ENCODE measurements at regions of chr10 and their contacts with region 1.

Region 1: DNA sequence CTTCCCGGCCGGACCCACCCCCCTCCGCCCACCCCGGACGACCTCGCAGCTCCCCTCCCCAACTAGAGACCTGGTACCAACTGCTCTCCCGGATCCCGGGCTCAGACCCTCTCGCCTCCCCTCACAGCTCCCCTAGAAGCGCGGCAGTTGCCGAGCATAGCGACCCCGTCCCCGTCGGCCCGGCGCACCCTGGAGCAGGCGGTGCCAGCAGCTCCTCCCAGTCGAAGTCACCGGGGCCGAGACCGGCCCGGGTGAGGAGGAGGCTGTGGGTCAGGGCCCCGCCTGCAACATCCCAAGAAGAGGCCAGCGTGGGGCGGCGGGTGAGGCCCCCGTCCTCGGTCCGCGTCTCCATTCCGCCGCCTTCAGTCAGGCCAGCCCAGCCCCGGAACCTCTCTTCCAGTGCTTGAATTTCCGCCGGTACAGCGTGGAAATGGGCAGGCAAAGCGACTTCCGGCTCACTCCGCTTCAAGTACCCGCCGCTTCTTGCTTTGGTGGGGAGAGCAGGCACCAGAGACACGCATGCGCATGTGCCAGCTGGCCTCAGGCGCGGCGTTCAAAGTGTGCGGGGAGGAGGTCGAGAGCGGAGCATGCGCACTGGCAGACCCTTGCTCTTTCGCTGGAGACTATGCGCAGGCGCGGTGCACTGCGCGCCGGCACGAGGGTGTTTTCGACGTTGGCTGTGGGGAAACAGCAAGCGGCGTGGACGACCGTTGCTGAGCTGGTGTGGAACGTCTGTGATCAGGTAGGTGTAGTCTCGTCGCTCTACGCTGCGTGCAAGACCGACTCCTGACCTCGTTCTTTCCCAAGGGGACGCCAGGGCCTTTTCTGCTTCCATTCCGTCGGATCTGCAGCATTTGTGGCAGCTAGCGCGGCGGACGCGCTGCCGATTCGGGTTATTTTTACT is at the start of gene C10orf88:
- DNase-seq: peak; percentile 95 to 99 (median 96)

Region 2: GRCh38 chr10:122879339-122880273 is 74.5 kb before region 1 on chr10 and contains the start of gene FAM24B:
- intact Hi-C with region 1: loop called (anchors 5 kb)
- DNase-seq: peak; percentile 84 to 99 (median 92)

Region 3: DNA sequence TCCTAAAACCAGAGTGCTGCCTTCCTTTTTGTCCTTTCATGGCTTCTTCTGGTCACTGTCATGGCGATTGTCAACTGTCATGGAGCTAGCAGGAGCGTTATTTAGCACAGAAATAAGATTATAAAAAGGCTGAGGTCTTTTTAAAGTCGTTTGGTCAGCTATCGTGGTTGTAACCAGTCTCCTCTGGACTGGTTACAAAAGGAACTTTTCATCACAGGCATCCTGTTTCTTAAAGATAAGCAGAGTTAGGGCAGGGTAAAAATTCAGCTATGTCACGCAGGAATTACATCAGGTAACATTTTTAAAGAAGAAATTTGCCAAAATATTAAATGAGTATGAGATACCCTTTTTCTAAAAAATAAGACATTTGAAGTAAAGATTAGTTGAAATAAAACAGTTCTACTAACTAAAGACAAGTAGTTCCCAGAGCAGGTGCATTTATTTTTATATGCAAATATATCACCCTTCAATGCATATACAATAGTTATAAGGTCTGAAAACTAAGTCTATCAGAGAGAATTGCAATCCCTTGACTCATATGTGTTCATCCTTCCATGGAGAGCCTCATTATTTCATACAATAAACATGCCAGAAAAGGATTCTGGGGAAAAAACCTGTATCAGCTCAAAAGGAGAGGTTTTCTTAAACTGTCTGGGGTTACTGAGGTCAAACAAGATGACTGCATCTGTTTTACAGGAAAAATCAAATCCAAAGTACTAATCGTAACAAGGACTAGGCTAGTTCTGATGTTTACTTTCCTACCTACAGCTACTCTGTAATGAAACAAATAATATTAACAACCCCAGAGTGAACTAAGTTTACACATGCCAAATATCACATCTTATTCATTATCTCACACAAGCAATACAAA is 22.8 kb before region 1 on chr10:
- intact Hi-C with region 1: no loop called
- DNase-seq: no peak

Region 4: DNA sequence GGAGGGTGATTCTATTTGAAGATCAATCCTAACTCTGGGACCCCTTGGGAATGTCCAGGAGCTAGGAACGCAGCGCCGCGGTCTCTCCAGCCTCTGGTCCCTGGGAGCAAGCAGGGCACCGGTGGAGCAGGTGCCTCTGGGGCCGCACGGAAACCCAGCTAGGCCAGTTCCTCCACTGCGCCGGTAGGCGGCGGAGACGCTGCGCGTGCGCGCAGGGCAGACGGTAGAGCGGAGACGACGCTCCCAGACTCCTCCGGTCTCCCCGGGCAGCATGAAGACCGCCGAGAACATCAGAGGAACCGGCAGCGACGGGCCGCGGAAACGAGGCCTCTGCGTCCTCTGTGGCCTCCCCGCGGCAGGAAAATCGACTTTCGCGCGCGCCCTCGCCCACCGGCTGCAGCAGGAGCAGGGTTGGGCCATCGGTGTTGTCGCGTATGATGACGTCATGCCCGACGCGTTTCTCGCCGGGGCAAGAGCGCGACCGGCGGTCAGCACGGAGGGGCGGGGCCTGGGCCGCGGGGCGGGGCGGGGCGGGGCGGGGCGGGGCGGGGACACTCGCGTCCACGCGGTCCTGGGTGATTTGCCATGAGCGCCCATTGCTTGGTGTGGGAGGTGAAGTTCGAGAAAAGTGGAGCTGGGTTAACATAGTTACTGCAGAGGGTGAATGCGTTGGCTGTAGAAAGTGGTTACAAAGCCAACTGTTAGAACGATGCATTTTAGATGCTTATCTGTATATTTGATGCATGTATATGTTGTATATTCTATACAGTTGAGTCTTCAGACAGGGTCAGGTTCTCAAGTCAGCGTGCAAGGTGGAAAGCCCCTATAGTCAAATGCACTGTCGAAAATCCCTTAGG is 26.4 kb after region 1 on chr10 and contains the start of gene PSTK:
- intact Hi-C with region 1: loop called (anchors 1 kb)
- DNase-seq: peak; percentile 82 to 98 (median 86)

Region 5: DNA sequence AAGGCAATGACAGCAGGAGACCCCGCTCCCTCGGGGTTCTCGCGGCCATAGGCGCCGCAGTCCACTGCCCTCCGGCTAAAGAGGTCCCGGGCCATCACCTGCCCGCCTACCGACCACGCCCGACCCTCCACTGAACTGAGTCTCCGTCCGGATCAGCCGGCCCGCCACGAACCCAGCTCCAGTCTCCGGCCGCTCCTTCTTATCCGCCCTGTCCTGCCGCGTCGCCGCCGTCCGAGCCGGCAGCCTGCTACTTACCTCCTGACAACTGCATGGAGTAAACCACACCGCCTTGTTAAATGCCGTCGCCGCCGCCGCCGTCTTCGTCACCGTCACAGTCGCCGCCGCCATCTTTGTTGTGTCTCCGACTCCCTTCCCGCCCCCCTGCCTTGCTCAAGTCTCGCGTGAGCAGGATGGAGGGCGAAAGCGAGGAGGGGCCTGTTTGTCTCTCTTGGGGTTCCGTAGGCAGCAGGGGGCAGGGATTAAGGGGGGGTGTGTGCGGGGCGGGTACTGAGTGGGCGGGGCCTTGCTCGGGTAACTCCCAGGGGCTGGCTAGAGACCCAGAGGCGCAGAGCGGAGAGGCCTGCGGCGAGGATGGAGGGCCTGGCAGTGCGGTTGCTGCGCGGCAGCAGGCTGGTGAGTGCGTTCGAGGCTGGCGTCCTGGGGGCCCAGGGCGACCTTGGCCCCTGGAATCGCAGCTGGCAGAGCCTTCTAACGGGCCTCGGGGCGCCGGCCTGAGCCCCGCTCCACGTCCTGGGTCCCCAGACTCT is 54.5 kb after region 1 on chr10 and contains the starts of genes ACADSB and IKZF5:
- intact Hi-C with region 1: loop called (anchors 1 kb)
- DNase-seq: peak; percentile 90 to 99 (median 93)

Measured in posterior cingulate gyrus (tissue), 11 donors.